ENCODE measurements at regions of chr5 and their contacts with region 1.

Region 1: DNA sequence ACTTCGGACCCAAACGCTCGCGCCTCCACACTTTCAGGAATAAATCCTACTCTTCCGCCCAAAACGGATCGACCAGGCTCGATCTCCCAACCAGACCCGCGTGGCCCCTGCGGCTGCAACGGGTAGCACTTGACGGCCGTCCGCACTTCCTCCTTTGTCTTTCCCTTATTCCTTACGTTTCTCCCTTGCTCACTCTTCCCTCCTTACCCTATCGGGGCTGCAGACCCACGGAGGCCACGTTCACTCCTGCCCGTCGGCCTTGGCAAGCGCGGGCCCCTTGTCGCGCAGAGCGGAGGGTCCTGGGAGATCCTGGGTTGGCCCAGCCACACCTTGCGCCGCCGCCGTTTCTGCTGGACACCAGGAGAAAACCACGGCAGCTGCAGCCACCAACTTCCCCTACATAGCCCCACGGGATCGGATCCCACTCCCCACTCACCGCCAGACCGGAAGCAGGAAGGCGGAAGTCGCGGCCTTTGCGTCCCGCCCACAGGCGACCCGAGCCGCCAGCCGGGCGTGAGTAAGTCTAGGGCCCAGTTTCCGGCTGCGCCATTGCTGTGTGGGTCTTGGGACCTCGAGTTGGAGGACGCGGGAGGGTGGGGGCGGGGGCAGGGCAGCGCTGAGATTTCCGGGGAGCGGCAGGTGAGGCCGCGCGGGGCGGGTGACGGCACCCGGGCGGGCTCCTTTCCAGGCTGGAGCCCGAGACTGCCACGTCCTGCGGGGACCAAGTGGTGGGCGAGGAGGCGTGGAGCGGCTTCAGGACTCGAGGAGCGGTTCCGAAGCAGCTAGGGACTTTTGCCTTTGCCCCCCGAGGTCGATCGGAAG is at the start of gene SMIM15:
- DNase-seq: peak; percentile 90
- ATAC-seq: peak; percentile 97
- H3K4me3 ChIP-seq: peak within 1 kb of the TSS; percentile 89 to 93 (median 90)
- H3K27ac ChIP-seq: peak within 1 kb of the TSS; percentile 95
- H3K4me1 ChIP-seq: peaks cover 37% of the 10 kb centered on the region
- H3K27me3 ChIP-seq: no peaks in the 10 kb centered on the region; a peak in 1 of 5 replicates
- CTCF ChIP-seq: no peak
- EP300 ChIP-seq: peak in 1 of 2 experiments; percentile 48; a peak in 2 of 4 replicates
- POLR2A ChIP-seq: peak; percentile 68 to 91; a peak in 3 of 4 replicates
- RAD21 ChIP-seq: no peak
- total RNA-seq, gene SMIM15: 58.2 and 74.4 TPM in 2 replicates

Region 2: GRCh38 chr5:60960591-60960990 is 201.6 kb before region 1 on chr5:
- CTCF ChIA-PET with region 1: no interaction called
- POLR2A ChIA-PET with region 1: no interaction called
- in situ Hi-C with region 1: no loop called
- intact Hi-C with region 1: loop called (anchors 10 kb)
- DNase-seq: no peak
- ATAC-seq: no peak
- H3K4me3 ChIP-seq: no peak overlapping the region
- H3K27ac ChIP-seq: no peak overlapping the region
- H3K4me1 ChIP-seq: no peaks in the 10 kb centered on the region
- H3K27me3 ChIP-seq: no peaks in the 10 kb centered on the region
- CTCF ChIP-seq: 0 out of 2 replicates have a peak, but pooled peaks have one; percentile 18
- EP300 ChIP-seq: no peak
- POLR2A ChIP-seq: no peak
- RAD21 ChIP-seq: no peak

Region 3: GRCh38 chr5:61055434-61056006 is 106.7 kb before region 1 on chr5:
- CTCF ChIA-PET with region 1: no interaction called
- POLR2A ChIA-PET with region 1: no interaction called
- in situ Hi-C with region 1: no loop called
- intact Hi-C with region 1: loop called (anchors 5 kb)
- DNase-seq: peak; percentile 28
- ATAC-seq: peak; percentile 45; the same call in 1 of the 3 replicates
- H3K4me3 ChIP-seq: no peak overlapping the region
- H3K27ac ChIP-seq: no peak overlapping the region
- H3K4me1 ChIP-seq: peaks cover 7% of the 10 kb centered on the region; the same call in 1 of the 2 replicates
- H3K27me3 ChIP-seq: no peaks in the 10 kb centered on the region
- CTCF ChIP-seq: peak; percentile 71
- EP300 ChIP-seq: no peak
- POLR2A ChIP-seq: no peak
- RAD21 ChIP-seq: peak; percentile 44

Region 4: GRCh38 chr5:61228691-61229280 is 66.6 kb after region 1 on chr5:
- CTCF ChIA-PET with region 1: no interaction called
- POLR2A ChIA-PET with region 1: no interaction called
- in situ Hi-C with region 1: no loop called
- intact Hi-C with region 1: no loop called
- DNase-seq: no peak
- ATAC-seq: no peak; the same call in 2 of the 3 replicates
- H3K4me3 ChIP-seq: no peak overlapping the region
- H3K27ac ChIP-seq: no peak overlapping the region
- H3K4me1 ChIP-seq: no peaks in the 10 kb centered on the region
- H3K27me3 ChIP-seq: peaks cover 0 to 4% of the 10 kb centered on the region in 2 experiments; a peak in 1 of 5 replicates
- CTCF ChIP-seq: no peak
- EP300 ChIP-seq: no peak
- POLR2A ChIP-seq: no peak
- RAD21 ChIP-seq: no peak

Region 5: GRCh38 chr5:61301341-61302199 is 139.3 kb after region 1 on chr5:
- CTCF ChIA-PET with region 1: no interaction called
- POLR2A ChIA-PET with region 1: interaction called, 3 read pairs
- in situ Hi-C with region 1: no loop called
- intact Hi-C with region 1: loop called (anchors 1 kb)
- DNase-seq: peak; percentile 98
- ATAC-seq: peak; percentile 99
- H3K4me3 ChIP-seq: peak overlapping the region; percentile 13 to 61 (median 28); a peak in 3 of 6 replicates
- H3K27ac ChIP-seq: peak overlapping the region; percentile 49
- H3K4me1 ChIP-seq: peaks cover 66% of the 10 kb centered on the region
- H3K27me3 ChIP-seq: no peaks in the 10 kb centered on the region
- CTCF ChIP-seq: no peak
- EP300 ChIP-seq: peak; percentile 83 to 84; a peak in 3 of 4 replicates
- POLR2A ChIP-seq: peak in 1 of 2 experiments; percentile 51; a peak in 2 of 4 replicates
- RAD21 ChIP-seq: no peak

Region 6: GRCh38 chr5:61658592-61659008 is 496.4 kb after region 1 on chr5:
- CTCF ChIA-PET with region 1: no interaction called
- POLR2A ChIA-PET with region 1: no interaction called
- in situ Hi-C with region 1: no loop called
- intact Hi-C with region 1: loop called (anchors 10 kb)
- DNase-seq: peak; percentile 44
- ATAC-seq: peak; percentile 96
- H3K4me3 ChIP-seq: no peak overlapping the region
- H3K27ac ChIP-seq: no peak overlapping the region
- H3K4me1 ChIP-seq: no peaks in the 10 kb centered on the region
- H3K27me3 ChIP-seq: peaks cover 2 to 29% of the 10 kb centered on the region in 2 experiments; a peak in 2 of 5 replicates
- CTCF ChIP-seq: peak; percentile 91
- EP300 ChIP-seq: no peak
- POLR2A ChIP-seq: no peak
- RAD21 ChIP-seq: no peak

Measured in HepG2 (cell line).